Endothelial cell of umbilical vein (primary cell): ENCODE measurements at regions of chr3 and their contacts with region 1.

Region 1: GRCh38 chr3:32467333-32468070 is 35.1 kb downstream of the CMTM6 start:
- DNase-seq: peak; percentile 89
- H3K4me3 ChIP-seq: peak overlapping the region in 1 of 3 experiments; percentile 6
- H3K27ac ChIP-seq: no peak overlapping the region
- H3K4me1 ChIP-seq: peaks cover 37% of the 10 kb centered on the region
- H3K27me3 ChIP-seq: no peaks in the 10 kb centered on the region
- CTCF ChIP-seq: peak; percentile 98 to 99
- POLR2A ChIP-seq: no peak

Region 2: DNA sequence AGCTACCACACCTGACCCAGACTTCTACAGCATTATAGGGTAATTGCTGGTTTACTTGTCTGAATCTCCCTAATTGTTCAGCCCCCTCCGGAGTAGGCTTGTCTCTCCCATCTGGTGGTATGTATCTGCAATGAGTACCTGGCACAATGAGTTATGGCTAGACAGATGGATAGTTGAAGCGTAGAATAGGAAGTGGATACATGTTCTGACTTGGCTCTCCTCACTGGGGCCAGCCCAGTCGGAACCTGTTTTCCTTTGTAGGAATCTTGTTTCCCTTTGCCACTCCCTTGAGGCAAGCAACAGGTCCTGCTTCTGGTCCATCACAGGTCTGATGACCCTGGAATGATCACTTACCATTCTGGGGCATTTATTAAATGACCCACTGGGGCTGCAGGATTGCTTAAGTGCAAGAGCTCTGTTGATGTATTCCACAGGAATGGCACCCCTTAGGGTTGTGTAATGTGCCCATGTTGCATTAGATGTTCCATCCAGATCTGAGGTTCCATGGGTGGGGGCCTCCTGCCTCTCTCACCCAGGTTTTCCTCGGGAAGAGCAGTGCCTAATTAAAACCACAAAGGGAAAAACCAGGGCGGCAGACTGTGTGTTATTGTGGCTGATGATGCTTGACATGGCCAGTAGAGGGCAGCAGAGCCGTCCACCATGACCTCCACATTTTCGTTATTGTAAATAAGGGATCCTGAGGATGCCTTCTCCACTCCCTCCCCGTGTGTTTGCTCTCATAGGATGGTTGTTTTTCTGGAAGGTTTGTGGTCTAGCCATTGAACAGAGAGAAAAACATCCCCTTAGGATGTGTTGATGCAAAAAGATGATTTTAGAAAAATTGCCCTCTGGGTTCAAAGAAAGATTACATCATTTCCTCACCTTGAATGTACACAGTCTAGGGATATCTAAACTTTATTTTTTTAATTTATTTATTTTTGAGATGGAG is 171.0 kb before region 1 on chr3:
- CTCF ChIA-PET with region 1: interaction called, 38 read pairs
- POLR2A ChIA-PET with region 1: no interaction called
- dilution Hi-C with region 1: no loop called
- intact Hi-C with region 1: loop called (anchors 1 kb)
- DNase-seq: peak; percentile 68
- H3K4me3 ChIP-seq: no peak overlapping the region
- H3K27ac ChIP-seq: no peak overlapping the region
- H3K4me1 ChIP-seq: peaks cover 3% of the 10 kb centered on the region
- H3K27me3 ChIP-seq: no peaks in the 10 kb centered on the region
- CTCF ChIP-seq: peak; percentile 80 to 86
- POLR2A ChIP-seq: no peak

Region 3: DNA sequence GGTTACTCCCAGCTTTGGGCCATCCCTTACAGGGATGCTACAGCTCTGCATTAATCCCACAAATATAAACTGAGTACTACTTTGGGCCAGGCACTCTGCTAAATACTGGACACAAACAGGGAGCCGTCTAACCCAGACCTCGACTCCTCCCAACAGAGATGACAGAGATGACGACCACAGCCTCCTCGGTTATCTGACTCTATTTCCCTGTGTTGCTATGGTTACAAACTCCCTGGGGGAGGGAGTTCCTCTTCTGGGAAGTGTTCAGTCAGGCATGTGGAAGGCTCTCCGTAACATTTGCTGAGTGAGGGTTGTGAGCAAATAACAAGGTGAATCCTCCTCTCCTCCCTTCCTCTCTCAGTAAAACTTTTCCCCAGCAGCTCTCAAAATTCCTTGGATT is 82.6 kb before region 1 on chr3:
- CTCF ChIA-PET with region 1: interaction called, 20 read pairs
- POLR2A ChIA-PET with region 1: no interaction called
- dilution Hi-C with region 1: no loop called
- intact Hi-C with region 1: no loop called
- DNase-seq: no peak
- H3K4me3 ChIP-seq: no peak overlapping the region
- H3K27ac ChIP-seq: no peak overlapping the region
- H3K4me1 ChIP-seq: no peaks in the 10 kb centered on the region
- H3K27me3 ChIP-seq: peaks cover 0 to 2% of the 10 kb centered on the region in 2 experiments
- CTCF ChIP-seq: no peak
- POLR2A ChIP-seq: no peak

Region 4: DNA sequence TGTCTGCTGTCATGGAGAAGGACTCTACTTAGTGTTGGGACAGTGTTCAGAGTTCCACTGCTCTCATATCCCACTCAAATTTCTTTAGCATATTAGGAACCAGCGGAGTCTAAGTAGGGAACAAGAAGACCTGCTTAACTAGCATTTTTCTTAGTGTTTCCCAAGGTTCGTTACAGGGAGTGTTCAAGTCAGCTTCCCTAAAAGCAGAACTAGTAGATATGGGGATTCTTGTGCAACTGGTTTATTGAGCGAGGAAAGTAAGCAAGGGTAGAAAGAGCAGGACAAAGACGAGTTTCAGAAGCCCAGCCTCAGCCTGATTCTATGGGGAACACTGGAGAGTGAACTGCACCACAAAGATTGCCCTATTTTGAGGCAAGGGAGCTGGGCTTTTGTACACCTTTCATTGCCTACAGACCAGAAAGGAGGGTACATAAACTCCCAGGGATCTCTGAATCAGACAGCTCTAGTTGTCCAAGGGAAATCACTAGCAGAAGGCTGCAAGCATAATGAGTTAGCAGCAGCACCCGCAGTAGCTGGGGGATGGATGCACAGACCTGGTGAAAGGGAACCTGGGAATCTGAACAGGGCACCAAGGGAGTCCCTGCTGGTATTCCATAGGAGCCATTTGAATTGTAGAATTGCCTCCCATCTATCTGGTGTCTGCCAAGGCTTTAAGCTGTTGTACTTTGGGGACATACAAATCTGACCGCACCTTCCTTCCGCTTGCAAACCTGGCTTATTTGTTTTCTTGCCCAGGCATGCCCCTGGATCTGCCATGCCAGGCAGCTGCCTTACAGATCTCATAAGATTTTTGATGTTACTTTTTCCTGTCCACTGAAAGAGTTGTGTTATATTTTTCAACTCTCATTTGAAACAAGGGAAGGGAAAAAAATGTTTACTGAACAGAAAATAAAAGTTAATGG is 60.8 kb before region 1 on chr3:
- CTCF ChIA-PET with region 1: interaction called, 41 read pairs
- POLR2A ChIA-PET with region 1: no interaction called
- dilution Hi-C with region 1: no loop called
- intact Hi-C with region 1: loop called (anchors 1 kb)
- DNase-seq: no peak
- H3K4me3 ChIP-seq: no peak overlapping the region
- H3K27ac ChIP-seq: no peak overlapping the region
- H3K4me1 ChIP-seq: peaks cover 19% of the 10 kb centered on the region
- H3K27me3 ChIP-seq: no peaks in the 10 kb centered on the region
- CTCF ChIP-seq: no peak
- POLR2A ChIP-seq: no peak

Region 5: GRCh38 chr3:32432711-32433530 is 34.6 kb before region 1 on chr3:
- CTCF ChIA-PET with region 1: interaction called, 10 read pairs
- POLR2A ChIA-PET with region 1: no interaction called
- dilution Hi-C with region 1: no loop called
- intact Hi-C with region 1: no loop called
- DNase-seq: no peak
- H3K4me3 ChIP-seq: no peak overlapping the region
- H3K27ac ChIP-seq: no peak overlapping the region
- H3K4me1 ChIP-seq: peaks cover under 1% of the 10 kb centered on the region
- H3K27me3 ChIP-seq: no peaks in the 10 kb centered on the region
- CTCF ChIP-seq: no peak
- POLR2A ChIP-seq: no peak

Region 6: DNA sequence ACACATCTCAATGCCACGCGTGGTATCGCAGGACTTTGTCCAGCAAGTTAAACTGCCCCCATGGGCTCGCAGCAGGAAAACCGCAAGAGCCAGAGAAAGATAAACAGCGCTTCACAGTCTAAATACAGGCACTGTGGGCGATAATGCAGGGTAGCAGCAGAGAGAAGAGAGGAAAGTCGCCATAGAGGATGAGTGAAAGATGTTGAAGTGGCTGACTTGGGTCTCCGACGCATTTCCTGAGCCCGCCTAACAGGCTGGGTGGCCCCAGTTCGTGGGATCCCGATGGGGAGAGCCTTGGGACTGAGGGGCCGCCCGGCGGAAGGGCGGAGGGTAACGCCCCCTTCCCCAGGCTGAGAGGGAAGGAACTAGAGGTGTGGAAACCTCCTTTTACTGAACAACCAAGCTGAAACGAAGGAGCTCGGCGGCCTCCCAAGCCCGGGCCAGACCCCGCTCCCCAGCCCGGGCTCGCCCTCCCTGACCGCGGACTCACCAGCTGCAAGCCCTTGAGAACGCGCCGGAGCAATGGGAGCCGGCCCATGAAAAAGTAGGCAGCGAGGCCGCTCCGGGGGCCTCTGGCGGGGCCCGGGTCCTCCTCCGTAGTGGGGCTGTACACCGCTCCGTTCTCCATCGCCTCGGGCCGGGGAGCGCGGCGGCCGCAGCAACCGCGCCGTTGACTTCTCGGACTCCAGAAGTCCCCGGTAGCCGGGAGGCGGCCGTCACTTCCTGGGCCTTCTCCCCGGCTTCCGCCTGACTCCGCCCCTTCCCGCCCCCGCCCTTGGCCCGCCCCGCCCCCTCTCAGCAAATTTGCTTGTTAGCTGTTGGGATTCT is 34.8 kb after region 1 on chr3 and contains the start of gene CMTM6:
- CTCF ChIA-PET with region 1: interaction called, 13 read pairs
- POLR2A ChIA-PET with region 1: no interaction called
- dilution Hi-C with region 1: no loop called
- intact Hi-C with region 1: loop called (anchors 1 kb)
- DNase-seq: peak; percentile 78
- H3K4me3 ChIP-seq: peak within 1 kb of the TSS; percentile 72 to 89 (median 81)
- H3K27ac ChIP-seq: peak within 1 kb of the TSS; percentile 87
- H3K4me1 ChIP-seq: peaks cover 19% of the 10 kb centered on the region
- H3K27me3 ChIP-seq: no peaks in the 10 kb centered on the region
- CTCF ChIP-seq: no peak
- POLR2A ChIP-seq: peak; percentile 78
- total RNA-seq, gene CMTM6: 54.0 and 56.3 TPM in 2 replicates

Region 7: GRCh38 chr3:32564196-32564595 is 96.7 kb after region 1 on chr3:
- CTCF ChIA-PET with region 1: no interaction called
- POLR2A ChIA-PET with region 1: no interaction called
- dilution Hi-C with region 1: no loop called
- intact Hi-C with region 1: no loop called
- DNase-seq: no peak
- H3K4me3 ChIP-seq: no peak overlapping the region
- H3K27ac ChIP-seq: no peak overlapping the region
- H3K4me1 ChIP-seq: peaks cover 8% of the 10 kb centered on the region
- H3K27me3 ChIP-seq: no peaks in the 10 kb centered on the region
- CTCF ChIP-seq: no peak
- POLR2A ChIP-seq: no peak

Region 8: DNA sequence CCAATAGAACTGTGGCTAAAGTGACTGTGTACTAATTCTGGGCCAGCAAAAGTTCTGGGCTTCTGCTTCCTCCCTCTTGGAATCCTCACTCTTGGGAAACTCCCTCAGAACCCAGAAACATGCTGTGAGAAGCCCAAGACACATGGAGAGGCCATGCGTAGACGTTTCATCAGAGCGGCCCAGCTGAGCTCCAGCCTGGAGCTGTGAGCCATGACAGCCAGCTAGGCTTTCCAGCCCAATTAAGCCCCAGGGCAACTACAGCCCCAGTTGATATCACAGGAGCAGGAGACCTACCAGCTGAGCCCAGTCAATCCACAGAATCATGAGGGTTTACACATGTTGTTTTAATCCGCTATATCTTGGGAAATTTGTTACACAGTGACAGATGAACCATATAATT is 173.9 kb after region 1 on chr3:
- CTCF ChIA-PET with region 1: no interaction called
- POLR2A ChIA-PET with region 1: no interaction called
- dilution Hi-C with region 1: no loop called
- intact Hi-C with region 1: no loop called
- DNase-seq: no peak
- H3K4me3 ChIP-seq: no peak overlapping the region
- H3K27ac ChIP-seq: no peak overlapping the region
- H3K4me1 ChIP-seq: no peaks in the 10 kb centered on the region
- H3K27me3 ChIP-seq: peaks cover 9 to 14% of the 10 kb centered on the region in 2 experiments
- CTCF ChIP-seq: no peak
- POLR2A ChIP-seq: no peak

Region 9: DNA sequence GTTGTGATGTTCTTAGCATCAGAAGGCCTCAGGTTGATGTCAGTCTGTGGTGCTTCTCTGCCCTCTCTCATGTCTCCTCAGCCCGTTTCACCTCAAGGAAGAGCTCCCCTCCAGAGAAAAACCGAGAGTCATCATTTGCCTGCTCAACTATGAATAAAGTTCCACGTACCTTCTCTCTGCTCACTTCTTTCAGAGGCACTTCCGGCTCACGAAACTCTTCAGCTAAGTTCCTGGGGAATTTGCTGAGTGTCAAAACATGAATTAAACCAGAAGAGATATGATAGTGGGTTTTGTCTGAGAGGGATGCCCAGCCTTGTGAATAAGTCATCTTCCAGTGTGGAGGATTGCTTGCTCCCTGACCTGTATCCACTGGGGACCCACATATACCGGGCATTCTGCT is 521.7 kb after region 1 on chr3:
- CTCF ChIA-PET with region 1: no interaction called
- POLR2A ChIA-PET with region 1: no interaction called
- dilution Hi-C with region 1: no loop called
- intact Hi-C with region 1: no loop called
- DNase-seq: no peak
- H3K4me3 ChIP-seq: no peak overlapping the region
- H3K27ac ChIP-seq: no peak overlapping the region
- H3K4me1 ChIP-seq: peaks cover 6% of the 10 kb centered on the region
- H3K27me3 ChIP-seq: no peaks in the 10 kb centered on the region
- CTCF ChIP-seq: no peak
- POLR2A ChIP-seq: no peak